B cell (primary cell): ENCODE measurements at regions of chr11 and their contacts with region 1.

Region 1: DNA sequence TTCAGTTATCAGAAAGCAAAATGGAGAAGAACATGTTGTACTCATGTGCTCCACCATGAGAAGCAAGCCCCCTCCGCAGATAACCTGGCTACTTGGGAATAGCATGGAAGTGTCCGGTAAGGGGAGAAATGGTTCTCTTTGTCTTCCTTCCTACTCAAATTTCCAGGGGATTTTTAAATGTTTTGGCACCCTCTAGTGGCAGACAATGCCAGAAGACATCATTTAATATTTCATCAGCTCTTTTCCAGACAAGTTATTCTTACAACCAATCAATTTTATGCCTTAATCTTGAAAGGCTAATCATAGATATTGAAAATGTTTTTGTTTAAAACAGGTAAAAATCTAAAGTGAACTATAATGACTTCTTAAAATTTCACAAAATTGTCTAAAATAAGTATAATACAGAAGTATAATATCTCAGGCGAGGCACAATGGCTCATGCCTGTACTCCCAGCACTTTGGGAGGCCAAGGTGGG is 15.7 kb downstream of the CRTAM start:
- DNase-seq: peak; percentile 79
- ATAC-seq: no peak
- H3K4me3 ChIP-seq: no peak overlapping the region
- H3K4me3 Mint-ChIP-seq: no peak overlapping the region
- H3K27ac ChIP-seq: no peak overlapping the region
- H3K27ac Mint-ChIP-seq: no peak overlapping the region
- H3K4me1 ChIP-seq: peaks cover 14 to 23% of the 10 kb centered on the region in 2 donors
- H3K4me1 Mint-ChIP-seq: peaks cover 24% of the 10 kb centered on the region
- H3K27me3 ChIP-seq: no peaks in the 10 kb centered on the region
- H3K27me3 Mint-ChIP-seq: no peaks in the 10 kb centered on the region
- CTCF ChIP-seq: peak; percentile 84

Region 2: GRCh38 chr11:121655537-121656327 is 1198.3 kb before region 1 on chr11:
- CTCF ChIA-PET with region 1: no interaction called
- POLR2A ChIA-PET with region 1: no interaction called
- intact Hi-C with region 1: loop called (anchors 10 kb)
- DNase-seq: peak; percentile 79
- ATAC-seq: peak; percentile 84
- H3K4me3 ChIP-seq: peak overlapping the region; percentile 46 to 92 (median 58)
- H3K4me3 Mint-ChIP-seq: peak overlapping the region; percentile 89
- H3K27ac ChIP-seq: peak overlapping the region in 1 of 2 donors; percentile 23
- H3K27ac Mint-ChIP-seq: peak overlapping the region; percentile 3
- H3K4me1 ChIP-seq: peaks cover 6 to 10% of the 10 kb centered on the region in 2 donors
- H3K4me1 Mint-ChIP-seq: peaks cover 8% of the 10 kb centered on the region
- H3K27me3 ChIP-seq: peaks cover 0 to 8% (median 4%) of the 10 kb centered on the region in 4 experiments
- H3K27me3 Mint-ChIP-seq: peaks cover 10% of the 10 kb centered on the region
- CTCF ChIP-seq: peak; percentile 66

Region 3: DNA sequence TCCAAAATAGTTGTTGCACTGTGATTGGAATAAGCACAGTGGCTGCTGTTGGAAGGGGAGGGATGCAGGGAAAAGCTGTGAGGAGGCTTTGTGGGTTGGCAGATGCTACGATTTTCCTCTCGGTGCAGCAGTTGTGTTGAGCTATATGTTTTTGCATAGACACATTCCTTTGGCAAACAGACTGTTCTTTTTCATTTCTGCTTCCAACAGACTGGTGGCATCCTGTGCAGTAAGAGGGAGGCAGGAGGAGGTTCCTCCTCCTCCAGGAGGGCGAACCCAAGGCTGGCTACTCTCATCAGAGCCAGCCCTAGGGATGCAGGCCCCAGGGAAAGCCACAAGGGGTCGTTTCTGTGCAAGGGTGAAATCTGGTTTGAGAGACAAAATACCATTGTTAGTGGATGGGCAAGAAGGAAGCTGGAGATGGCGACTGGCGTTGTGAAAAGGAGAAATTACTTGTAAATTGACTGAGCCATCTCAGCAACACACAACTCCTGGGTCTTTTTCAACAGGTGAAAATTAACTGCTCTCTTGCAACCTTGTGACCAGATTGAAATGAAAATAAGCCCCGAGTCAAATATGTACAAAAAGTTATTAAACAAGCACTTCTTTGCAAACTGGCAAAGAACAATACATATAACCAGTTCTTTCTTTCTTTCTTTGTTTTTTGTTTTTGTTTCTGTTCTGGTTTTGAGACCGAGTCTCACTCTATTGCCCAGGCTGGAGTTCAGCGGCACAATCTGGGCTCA is 225.0 kb before region 1 on chr11:
- CTCF ChIA-PET with region 1: interaction called, 41 read pairs
- POLR2A ChIA-PET with region 1: no interaction called
- intact Hi-C with region 1: loop called (anchors 1 kb)
- DNase-seq: peak; percentile 74
- ATAC-seq: peak; percentile 73
- H3K4me3 ChIP-seq: no peak overlapping the region
- H3K4me3 Mint-ChIP-seq: no peak overlapping the region
- H3K27ac ChIP-seq: no peak overlapping the region
- H3K27ac Mint-ChIP-seq: no peak overlapping the region
- H3K4me1 ChIP-seq: no peaks in the 10 kb centered on the region
- H3K4me1 Mint-ChIP-seq: peaks cover 5% of the 10 kb centered on the region
- H3K27me3 ChIP-seq: peaks cover 0 to 4% (median 0%) of the 10 kb centered on the region in 4 experiments
- H3K27me3 Mint-ChIP-seq: peaks cover 12% of the 10 kb centered on the region
- CTCF ChIP-seq: peak; percentile 78

Region 4: GRCh38 chr11:122796128-122796717 is 57.8 kb before region 1 on chr11:
- CTCF ChIA-PET with region 1: interaction called, 319 read pairs
- POLR2A ChIA-PET with region 1: interaction called, 4 read pairs
- intact Hi-C with region 1: loop called (anchors 1 kb)
- DNase-seq: peak; percentile 75
- ATAC-seq: peak; percentile 93
- H3K4me3 ChIP-seq: no peak overlapping the region
- H3K4me3 Mint-ChIP-seq: no peak overlapping the region
- H3K27ac ChIP-seq: no peak overlapping the region
- H3K27ac Mint-ChIP-seq: no peak overlapping the region
- H3K4me1 ChIP-seq: no peaks in the 10 kb centered on the region
- H3K4me1 Mint-ChIP-seq: peaks cover 4% of the 10 kb centered on the region
- H3K27me3 ChIP-seq: no peaks in the 10 kb centered on the region
- H3K27me3 Mint-ChIP-seq: no peaks in the 10 kb centered on the region
- CTCF ChIP-seq: peak; percentile 96

Region 5: GRCh38 chr11:122814401-122814800 is 39.6 kb before region 1 on chr11:
- CTCF ChIA-PET with region 1: interaction called, 53 read pairs
- POLR2A ChIA-PET with region 1: no interaction called
- intact Hi-C with region 1: loop called (anchors 5 kb)
- DNase-seq: no peak
- ATAC-seq: no peak
- H3K4me3 ChIP-seq: no peak overlapping the region
- H3K4me3 Mint-ChIP-seq: no peak overlapping the region
- H3K27ac ChIP-seq: no peak overlapping the region
- H3K27ac Mint-ChIP-seq: no peak overlapping the region
- H3K4me1 ChIP-seq: peaks cover 12 to 14% of the 10 kb centered on the region in 2 donors
- H3K4me1 Mint-ChIP-seq: peaks cover 18% of the 10 kb centered on the region
- H3K27me3 ChIP-seq: no peaks in the 10 kb centered on the region
- H3K27me3 Mint-ChIP-seq: no peaks in the 10 kb centered on the region
- CTCF ChIP-seq: peak; percentile 12

Region 6: GRCh38 chr11:122832721-122833470 is 21.1 kb before region 1 on chr11:
- CTCF ChIA-PET with region 1: interaction called, 48 read pairs
- POLR2A ChIA-PET with region 1: no interaction called
- intact Hi-C with region 1: no loop called
- DNase-seq: peak; percentile 51
- ATAC-seq: peak; percentile 33
- H3K4me3 ChIP-seq: no peak overlapping the region
- H3K4me3 Mint-ChIP-seq: peak overlapping the region; percentile 33
- H3K27ac ChIP-seq: no peak overlapping the region
- H3K27ac Mint-ChIP-seq: no peak overlapping the region
- H3K4me1 ChIP-seq: peaks cover 15 to 24% of the 10 kb centered on the region in 2 donors
- H3K4me1 Mint-ChIP-seq: peaks cover 20% of the 10 kb centered on the region
- H3K27me3 ChIP-seq: peaks cover 0 to 28% (median 1%) of the 10 kb centered on the region in 4 experiments
- H3K27me3 Mint-ChIP-seq: peaks cover 14% of the 10 kb centered on the region
- CTCF ChIP-seq: no peak

Region 7: GRCh38 chr11:122882857-122883645 is 29.0 kb after region 1 on chr11:
- CTCF ChIA-PET with region 1: interaction called, 13 read pairs
- POLR2A ChIA-PET with region 1: no interaction called
- intact Hi-C with region 1: no loop called
- DNase-seq: peak; percentile 68
- ATAC-seq: peak; percentile 72
- H3K4me3 ChIP-seq: peak overlapping the region; percentile 12 to 85 (median 77)
- H3K4me3 Mint-ChIP-seq: peak overlapping the region; percentile 89
- H3K27ac ChIP-seq: peak overlapping the region; percentile 74 to 80
- H3K27ac Mint-ChIP-seq: peak overlapping the region; percentile 85
- H3K4me1 ChIP-seq: peaks cover 10 to 12% of the 10 kb centered on the region in 2 donors
- H3K4me1 Mint-ChIP-seq: peaks cover 11% of the 10 kb centered on the region
- H3K27me3 ChIP-seq: peaks cover 0 to 19% (median 6%) of the 10 kb centered on the region in 4 experiments
- H3K27me3 Mint-ChIP-seq: peaks cover 22% of the 10 kb centered on the region
- CTCF ChIP-seq: no peak